ENCODE measurements at regions of chr1 and their contacts with region 1.

Region 1: GRCh38 chr1:199226163-199226562 is 587.3 kb downstream of the PTPRC start:
- DNase-seq: peak; percentile 26
- H3K4me3 Mint-ChIP-seq: peak overlapping the region; percentile 37
- H3K27ac Mint-ChIP-seq: peak overlapping the region; percentile 51
- H3K4me1 Mint-ChIP-seq: peaks cover 21% of the 10 kb centered on the region
- H3K27me3 Mint-ChIP-seq: peaks cover 6% of the 10 kb centered on the region

Region 2: GRCh38 chr1:198880818-198881597 is 345.2 kb before region 1 on chr1:
- intact Hi-C with region 1: loop called (anchors 1 kb)
- DNase-seq: no peak
- H3K4me3 Mint-ChIP-seq: no peak overlapping the region
- H3K27ac Mint-ChIP-seq: peak overlapping the region; percentile 71
- H3K4me1 Mint-ChIP-seq: peaks cover 59% of the 10 kb centered on the region
- H3K27me3 Mint-ChIP-seq: no peaks in the 10 kb centered on the region

Region 3: GRCh38 chr1:199009447-199009846 is 216.7 kb before region 1 on chr1:
- intact Hi-C with region 1: loop called (anchors 1 kb)
- DNase-seq: peak; percentile 8
- H3K4me3 Mint-ChIP-seq: peak overlapping the region; percentile 75
- H3K27ac Mint-ChIP-seq: peak overlapping the region; percentile 76
- H3K4me1 Mint-ChIP-seq: peaks cover 50% of the 10 kb centered on the region
- H3K27me3 Mint-ChIP-seq: no peaks in the 10 kb centered on the region

Region 4: DNA sequence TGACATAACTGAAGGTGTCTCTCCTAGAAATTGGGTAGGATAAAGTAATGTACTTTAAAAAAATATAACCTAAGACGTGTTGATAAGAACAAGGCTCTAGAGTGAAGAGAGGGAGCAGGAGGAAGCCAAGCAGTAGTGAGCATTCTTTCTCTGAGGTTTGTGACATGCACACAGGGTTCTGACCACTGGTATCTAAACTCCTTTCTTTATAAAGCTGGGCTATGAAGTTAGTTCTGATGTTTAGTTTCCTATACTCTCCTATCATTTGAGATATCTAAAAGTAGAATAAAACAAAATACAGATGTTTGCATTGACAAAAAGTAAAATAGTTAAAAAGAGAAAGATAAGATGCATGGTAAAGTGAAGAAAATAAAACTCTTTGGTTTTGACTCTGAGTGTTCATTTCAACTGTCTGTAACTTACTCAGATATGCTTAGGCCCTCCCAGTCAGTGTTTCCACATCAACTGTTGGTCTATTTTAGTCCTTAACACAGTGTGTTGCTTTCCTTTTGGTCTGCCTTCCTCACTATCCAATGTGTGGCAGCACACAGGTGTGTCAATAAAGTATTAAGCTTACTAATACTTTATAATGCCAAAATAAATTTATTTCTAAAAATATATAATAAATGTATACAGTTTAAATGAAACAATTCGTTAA is 43.8 kb before region 1 on chr1:
- intact Hi-C with region 1: loop called (anchors 2 kb)
- DNase-seq: no peak
- H3K4me3 Mint-ChIP-seq: no peak overlapping the region
- H3K27ac Mint-ChIP-seq: no peak overlapping the region
- H3K4me1 Mint-ChIP-seq: peaks cover 8% of the 10 kb centered on the region
- H3K27me3 Mint-ChIP-seq: no peaks in the 10 kb centered on the region

Measured in activated T-helper 1 cell treated with anti-CD3 and anti-CD28 coated beads, Interleukin-12 subunit alpha, Interleukin-12 subunit beta, Interleukin-2, Interleukin-4 antibody, amounts not matched to agents 30 ng/mL and 10 ng/mL and 1 ng/mL, durations not matched to agents 14 hours and 24 hours and 36 hours (primary cell).